HAP-1 (cell line): ENCODE measurements at regions of chr1 and their contacts with region 1.

Region 1: GRCh38 chr1:109532365-109533136 is 7.1 kb upstream of the GPR61 start:
- DNase-seq: peak; percentile 63 to 91
- H3K4me3 ChIP-seq: peak overlapping the region; percentile 9; the same call in 1 of the 2 replicates
- H3K4me1 ChIP-seq: peaks cover 8% of the 10 kb centered on the region
- H3K27me3 ChIP-seq: no peaks in the 10 kb centered on the region

Region 2: DNA sequence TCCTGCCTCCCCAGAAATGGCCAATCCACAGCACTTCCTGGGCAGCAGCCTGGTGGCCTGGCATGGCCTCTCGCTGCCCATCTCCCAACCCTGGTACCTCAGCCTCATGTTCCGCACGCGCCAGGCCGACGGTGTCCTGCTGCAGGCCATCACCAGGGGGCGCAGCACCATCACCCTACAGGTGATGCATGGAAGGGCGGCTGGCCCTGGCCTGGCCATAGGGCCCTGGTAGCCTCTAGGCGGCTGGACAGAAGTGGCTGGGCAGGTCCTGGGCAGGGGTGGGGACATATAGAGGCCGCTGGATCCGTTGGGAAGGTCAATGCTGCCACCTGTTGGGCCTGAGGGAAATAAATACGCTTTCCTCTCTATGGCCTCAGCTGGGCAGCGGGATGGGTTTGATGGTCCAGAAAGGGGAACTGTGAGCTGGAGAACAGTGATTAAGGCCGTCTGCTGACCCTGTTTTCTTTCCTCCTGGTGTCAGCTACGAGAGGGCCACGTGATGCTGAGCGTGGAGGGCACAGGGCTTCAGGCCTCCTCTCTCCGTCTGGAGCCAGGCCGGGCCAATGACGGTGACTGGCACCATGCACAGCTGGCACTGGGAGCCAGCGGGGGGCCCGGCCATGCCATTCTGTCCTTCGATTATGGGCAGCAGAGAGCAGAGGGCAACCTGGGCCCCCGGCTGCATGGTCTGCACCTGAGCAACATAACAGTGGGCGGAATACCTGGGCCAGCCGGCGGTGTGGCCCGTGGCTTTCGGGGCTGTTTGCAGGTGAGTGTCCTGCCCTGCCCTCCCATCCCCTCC is 268.8 kb before region 1 on chr1:
- in situ Hi-C with region 1: loop called (anchors 10 kb)
- DNase-seq: peak; percentile 60 to 91
- H3K4me3 ChIP-seq: no peak overlapping the region
- H3K4me1 ChIP-seq: no peaks in the 10 kb centered on the region
- H3K27me3 ChIP-seq: no peaks in the 10 kb centered on the region

Region 3: DNA sequence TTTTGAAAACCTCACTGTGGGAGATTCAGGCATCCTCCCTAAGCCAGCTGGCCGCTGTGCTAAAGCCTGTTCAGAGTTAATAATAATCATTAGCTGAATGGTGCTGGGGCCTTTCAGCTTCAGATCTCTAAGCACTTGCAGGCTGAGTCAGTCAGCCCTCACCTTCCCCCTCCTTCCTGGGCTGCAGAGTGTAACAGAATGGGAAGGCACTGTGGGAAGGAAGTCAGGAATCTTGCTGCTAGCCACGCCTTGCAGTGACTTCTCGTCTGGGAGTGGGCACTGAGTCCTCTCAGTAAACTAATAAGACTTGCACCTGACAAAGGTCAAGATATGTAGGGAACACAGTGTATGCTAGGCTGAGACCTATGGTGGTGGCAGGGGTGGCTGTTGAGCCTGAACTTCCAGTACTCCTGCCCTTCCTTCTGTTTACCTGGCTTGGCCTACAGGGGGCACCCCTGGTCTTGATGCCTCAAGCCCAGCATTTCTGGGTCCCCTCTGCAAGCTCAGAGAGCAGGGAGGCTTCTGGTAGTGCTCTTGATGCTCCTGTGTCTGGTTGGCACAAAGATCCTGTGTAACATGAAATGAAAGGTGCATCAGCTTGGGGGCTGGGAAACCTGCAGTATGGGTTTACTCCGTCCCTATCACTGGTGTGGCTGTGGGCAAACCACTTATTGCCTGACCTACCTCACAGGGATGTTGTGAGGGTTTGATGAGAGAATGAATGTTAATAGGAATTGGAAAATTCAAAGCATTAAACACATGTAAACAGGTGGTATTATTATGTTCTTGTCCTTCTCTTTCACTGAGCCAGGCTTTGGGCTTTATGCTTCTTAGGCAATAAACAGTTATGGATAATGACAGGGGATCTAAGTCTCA is 32.7 kb before region 1 on chr1:
- in situ Hi-C with region 1: loop called (anchors 5 kb)
- DNase-seq: peak in 1 of 2 experiments; percentile 67
- H3K4me3 ChIP-seq: no peak overlapping the region
- H3K4me1 ChIP-seq: 0 out of 2 replicates have a peak, but pooled peaks cover 2% of the 10 kb centered on the region
- H3K27me3 ChIP-seq: no peaks in the 10 kb centered on the region